GM23248 (cell line): ENCODE measurements at regions of chr17 and their contacts with region 1.

Region 1: GRCh38 chr17:57243171-57243948 is 13.0 kb upstream of the MSI2 start:
- DNase-seq: peak; percentile 78
- H3K4me3 ChIP-seq: no peak overlapping the region
- H3K27ac ChIP-seq: no peak overlapping the region
- H3K4me1 ChIP-seq: no peaks in the 10 kb centered on the region
- H3K27me3 ChIP-seq: peaks cover 27% of the 10 kb centered on the region; the same call in 1 of the 2 replicates

Region 2: GRCh38 chr17:56717491-56717890 is 525.9 kb before region 1 on chr17:
- in situ Hi-C with region 1: no loop called
- DNase-seq: no peak
- H3K4me3 ChIP-seq: no peak overlapping the region
- H3K27ac ChIP-seq: no peak overlapping the region
- H3K4me1 ChIP-seq: no peaks in the 10 kb centered on the region
- H3K27me3 ChIP-seq: no peaks in the 10 kb centered on the region

Region 3: GRCh38 chr17:57535249-57535966 is 292.0 kb after region 1 on chr17:
- in situ Hi-C with region 1: no loop called
- DNase-seq: no peak
- H3K4me3 ChIP-seq: no peak overlapping the region
- H3K27ac ChIP-seq: no peak overlapping the region
- H3K4me1 ChIP-seq: peaks cover 4% of the 10 kb centered on the region
- H3K27me3 ChIP-seq: no peaks in the 10 kb centered on the region

Region 4: DNA sequence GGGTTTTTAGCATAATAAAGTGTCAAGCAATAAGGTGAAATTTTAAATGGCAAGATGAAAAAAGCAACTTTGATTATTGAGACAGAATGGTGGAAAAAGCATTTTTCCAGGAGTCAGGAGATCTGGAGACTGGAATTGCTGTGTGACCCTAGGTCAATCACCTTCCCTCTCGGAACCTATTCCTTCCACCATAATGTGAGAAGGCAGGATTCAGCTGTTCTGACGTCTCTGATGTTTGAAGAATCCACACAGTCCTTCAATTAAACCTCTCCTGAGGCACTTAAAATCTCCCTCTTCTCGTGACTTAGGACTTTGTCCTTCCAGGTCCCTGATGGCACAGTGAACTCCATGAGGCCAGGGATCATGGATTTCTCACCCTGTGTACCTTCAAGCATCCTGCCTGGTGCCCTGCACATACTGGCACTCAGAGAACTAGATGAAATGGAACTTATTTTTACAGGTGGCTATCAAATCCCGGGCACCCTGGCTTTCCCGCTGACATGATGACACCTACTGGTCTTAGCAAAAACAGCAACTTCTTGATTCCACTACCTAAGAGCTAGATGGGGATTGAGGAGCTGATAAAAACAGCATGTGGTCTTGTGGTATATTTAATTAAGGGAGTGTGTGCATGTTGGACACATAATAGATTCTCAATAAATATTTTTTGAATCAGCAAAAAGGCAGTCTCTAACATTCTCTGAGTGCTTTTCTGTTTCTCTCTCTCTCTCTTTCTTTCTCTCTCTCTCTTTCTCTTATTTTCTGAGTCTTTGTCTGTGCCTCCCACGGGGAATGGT is 504.1 kb after region 1 on chr17:
- in situ Hi-C with region 1: loop called (anchors 10 kb)
- DNase-seq: peak; percentile 74
- H3K4me3 ChIP-seq: no peak overlapping the region
- H3K27ac ChIP-seq: no peak overlapping the region
- H3K4me1 ChIP-seq: no peaks in the 10 kb centered on the region
- H3K27me3 ChIP-seq: peaks cover 29% of the 10 kb centered on the region